ENCODE measurements at regions of chr2 and their contacts with region 1.

Region 1: DNA sequence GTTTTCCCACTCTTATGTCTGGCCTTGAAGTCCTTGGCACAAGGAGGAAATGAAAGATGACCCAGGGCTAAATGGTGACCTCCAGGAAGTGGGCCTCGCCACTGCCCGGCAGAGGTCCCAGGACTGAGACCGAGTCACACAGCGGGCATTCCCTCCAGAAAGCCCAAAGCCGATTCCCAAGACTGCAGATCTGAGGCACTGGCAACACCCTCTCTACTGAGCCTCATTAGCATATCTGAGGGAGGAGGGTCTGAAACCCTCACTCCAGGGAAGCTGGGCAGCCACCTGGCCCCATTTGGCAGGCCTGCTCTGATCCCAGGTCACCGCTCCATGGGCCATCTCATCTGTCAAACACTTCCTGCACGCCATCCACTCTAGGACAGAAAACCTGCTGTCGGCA is 29.1 kb downstream of the FAM178B start:
- DNase-seq: peak in 2 of 5 donors; percentile 14 to 45
- H3K4me3 ChIP-seq: no peak overlapping the region
- H3K27ac ChIP-seq: no peak overlapping the region
- H3K4me1 ChIP-seq: peaks cover 0 to 9% (median 0%) of the 10 kb centered on the region in 3 donors
- H3K27me3 ChIP-seq: no peaks in the 10 kb centered on the region
- CTCF ChIP-seq: no peak

Region 2: DNA sequence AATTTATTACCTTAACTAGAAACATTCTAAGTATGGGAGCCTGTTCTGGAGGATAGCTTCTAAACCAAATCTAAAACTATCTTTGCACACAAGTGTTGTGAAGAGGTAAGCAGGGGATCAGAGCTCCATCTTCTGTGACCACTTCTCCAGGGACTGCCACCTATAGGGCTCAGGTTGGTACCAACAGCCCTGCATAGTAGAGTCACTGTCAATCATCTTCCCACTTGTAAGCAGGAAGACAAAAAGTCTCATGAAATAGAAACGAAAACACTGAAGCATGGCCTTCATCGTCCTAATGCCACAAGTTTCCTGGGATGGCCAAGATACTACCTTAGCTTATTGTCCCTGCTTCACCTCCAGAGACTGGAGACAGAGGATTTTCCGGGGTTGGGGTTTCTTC is 363.0 kb before region 1 on chr2:
- intact Hi-C with region 1: no loop called
- DNase-seq: no peak
- H3K4me3 ChIP-seq: no peak overlapping the region
- H3K27ac ChIP-seq: no peak overlapping the region
- H3K4me1 ChIP-seq: no peaks in the 10 kb centered on the region
- H3K27me3 ChIP-seq: no peaks in the 10 kb centered on the region
- CTCF ChIP-seq: no peak

Region 3: DNA sequence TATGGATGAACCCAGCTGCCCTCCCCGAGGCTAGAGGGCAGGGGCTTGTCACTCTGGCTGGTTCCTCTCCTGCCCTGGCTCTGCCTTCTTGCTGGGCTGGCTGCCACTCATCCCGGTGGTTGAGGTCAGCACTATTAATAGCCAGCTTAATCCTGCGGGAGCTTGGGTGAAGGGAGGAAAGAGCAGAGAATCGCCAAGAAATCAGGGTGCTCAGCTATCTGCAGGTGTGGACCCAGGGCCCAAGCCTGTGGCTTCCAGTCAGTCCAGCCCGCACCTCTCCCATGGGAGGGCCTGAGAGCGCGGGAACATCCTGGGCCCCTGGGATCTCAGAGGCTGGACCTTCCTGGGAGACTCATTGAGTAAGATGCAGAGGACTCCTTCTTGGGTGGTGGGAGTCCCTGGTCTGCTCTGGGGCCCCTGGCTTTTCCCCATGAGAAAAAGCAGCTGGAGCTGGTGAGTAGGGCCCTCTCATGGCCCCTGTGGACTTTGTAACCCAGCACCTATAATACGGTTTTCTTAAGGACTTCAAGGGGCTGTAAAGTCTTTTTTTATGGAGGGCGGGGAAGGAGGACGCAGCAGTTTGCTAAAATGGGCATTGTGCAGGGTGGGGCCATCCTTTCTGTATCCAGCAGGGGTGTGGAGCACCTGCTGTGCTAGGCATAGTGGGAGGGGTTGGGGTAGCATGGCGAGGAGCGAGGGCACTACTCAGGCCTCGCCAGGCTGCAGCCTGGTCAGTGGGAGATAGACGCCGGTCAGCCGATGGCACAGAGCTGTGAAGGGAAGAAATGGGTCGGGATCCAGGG is 168.6 kb before region 1 on chr2:
- intact Hi-C with region 1: no loop called
- DNase-seq: peak in 1 of 5 donors; percentile 45
- H3K4me3 ChIP-seq: no peak overlapping the region
- H3K27ac ChIP-seq: no peak overlapping the region
- H3K4me1 ChIP-seq: no peaks in the 10 kb centered on the region
- H3K27me3 ChIP-seq: no peaks in the 10 kb centered on the region
- CTCF ChIP-seq: no peak

Region 4: DNA sequence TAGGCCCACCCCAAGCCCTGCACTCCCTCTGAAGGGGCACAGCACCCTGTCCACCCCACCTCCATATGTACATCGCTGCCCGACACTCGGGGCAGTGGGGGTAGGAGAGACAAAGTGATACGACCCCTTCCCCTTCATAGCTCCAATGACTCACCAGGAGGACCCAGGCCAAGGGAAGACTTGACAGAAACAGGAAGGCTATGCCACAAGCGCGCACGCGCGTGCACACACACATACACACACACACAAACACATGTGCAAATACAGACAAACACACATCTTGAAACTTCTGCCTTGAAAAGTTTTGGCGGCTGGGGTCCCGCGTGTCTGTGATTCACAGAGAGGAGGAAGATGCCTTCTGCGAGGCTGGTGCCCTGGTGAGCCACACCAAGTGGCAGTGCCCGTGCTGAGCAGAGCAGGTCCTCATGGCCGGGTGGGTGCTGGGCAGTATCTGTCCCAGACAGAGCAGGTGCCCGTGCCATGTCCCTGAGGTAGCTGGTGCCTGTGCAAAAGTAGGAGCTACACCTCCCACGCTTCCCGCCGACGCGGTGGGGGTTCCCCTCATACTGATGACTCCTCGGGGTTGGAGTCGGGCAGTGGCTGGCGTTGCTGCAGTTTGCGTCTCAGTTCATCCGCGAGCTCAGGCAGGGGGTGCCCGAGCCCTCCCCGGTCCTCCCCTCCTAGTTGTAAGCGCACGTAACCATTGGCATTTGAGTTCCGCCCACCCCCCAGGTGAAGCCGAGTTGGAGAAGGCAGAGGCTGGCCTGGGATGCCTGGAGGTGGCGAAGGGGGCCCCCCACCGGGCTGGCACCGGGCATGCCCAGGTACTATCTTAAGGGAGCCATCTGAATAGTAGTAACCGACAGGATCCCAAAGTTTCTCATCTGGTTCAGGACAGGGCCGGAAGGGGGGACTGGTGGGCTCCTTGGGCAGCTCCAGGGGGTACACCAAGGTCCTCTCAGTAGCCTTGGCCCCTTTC is 96.9 kb before region 1 on chr2:
- intact Hi-C with region 1: loop called (anchors 5 kb)
- DNase-seq: peak in 1 of 5 donors; percentile 76
- H3K4me3 ChIP-seq: no peak overlapping the region
- H3K27ac ChIP-seq: no peak overlapping the region
- H3K4me1 ChIP-seq: peaks cover 0 to 18% (median 7%) of the 10 kb centered on the region in 3 donors
- H3K27me3 ChIP-seq: no peaks in the 10 kb centered on the region
- CTCF ChIP-seq: no peak

Measured in kidney (tissue), 22 donors.